Right ventricle myocardium superior (tissue), 1 donor: ENCODE measurements at regions of chr3 and their contacts with region 1.

Region 1: DNA sequence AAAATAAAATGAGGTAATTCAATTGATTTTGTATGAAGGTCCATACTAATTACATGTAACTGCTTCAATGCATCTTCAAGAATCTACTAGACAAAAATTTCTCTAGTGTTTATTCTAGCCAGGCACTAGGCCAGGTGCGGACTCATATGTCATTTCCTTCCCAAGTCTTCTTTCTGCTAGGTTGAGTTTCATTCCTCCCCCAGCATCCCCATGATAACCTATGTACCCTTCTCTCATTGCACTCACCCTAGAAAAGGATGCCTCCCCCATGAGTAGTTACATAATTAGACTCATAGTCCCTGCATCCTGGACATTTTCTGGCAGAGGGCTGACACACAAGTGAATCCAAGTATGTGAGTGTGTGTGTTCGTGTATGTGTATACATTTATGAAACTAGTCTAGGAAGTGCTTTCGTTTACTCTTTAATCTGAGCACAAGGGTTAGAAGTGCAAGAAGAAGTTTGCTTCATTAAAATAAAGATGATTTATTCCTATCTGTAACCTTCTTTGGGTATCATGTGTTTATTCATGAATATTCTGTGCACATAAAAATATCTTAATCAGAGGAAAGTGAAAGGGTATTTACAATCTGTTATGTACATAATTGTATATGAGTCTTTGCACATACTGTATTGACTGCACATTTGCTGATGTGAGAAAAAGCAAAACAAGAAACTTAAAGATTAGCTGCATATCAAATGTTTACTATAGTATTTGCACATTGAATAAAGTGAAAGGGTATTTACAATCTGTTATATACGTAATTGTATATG is 585.6 kb upstream of the ZNF717 start:
- DNase-seq: no peak
- ATAC-seq: no peak

Region 2: DNA sequence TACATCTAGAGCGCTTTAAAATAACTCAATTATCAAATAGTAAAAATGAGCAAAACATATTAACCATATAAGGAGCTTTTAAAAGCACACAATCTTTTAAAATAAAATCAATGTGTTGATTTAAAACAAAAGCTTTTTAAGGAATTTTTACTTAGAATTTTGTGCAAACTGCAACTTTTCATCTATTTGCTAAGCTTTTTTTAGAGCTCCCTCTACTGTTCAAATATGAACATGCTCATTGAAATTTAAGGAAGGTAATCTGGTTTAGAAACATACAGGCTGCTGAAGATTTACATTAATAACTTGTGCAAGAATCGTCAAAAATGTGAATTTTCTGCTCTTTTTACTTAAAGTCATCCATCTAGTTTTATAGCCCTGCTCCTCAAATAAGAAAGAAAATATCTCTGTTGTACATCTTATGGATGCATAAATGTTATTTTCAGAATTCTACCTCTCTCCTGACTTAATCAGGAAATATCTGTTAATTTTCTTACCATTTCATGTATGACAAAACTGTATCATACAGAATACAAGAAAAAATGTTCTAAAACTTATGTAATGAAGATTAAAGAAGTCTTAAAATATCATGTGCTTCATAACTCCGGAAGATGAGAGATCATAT is 199.6 kb after region 1 on chr3:
- intact Hi-C with region 1: loop called (anchors 10 kb)
- DNase-seq: no peak
- ATAC-seq: no peak